ENCODE measurements at regions of chr18 and their contacts with region 1.

Region 1: GRCh38 chr18:13710460-13710859 is 15.9 kb downstream of the FAM210A start:
- DNase-seq: no peak
- ATAC-seq: no peak
- H3K4me3 ChIP-seq: no peak overlapping the region
- H3K27ac ChIP-seq: no peak overlapping the region
- H3K4me1 ChIP-seq: peaks cover 0 to 67% (median 9%) of the 10 kb centered on the region in 12 donors
- H3K27me3 ChIP-seq: no peaks in the 10 kb centered on the region
- CTCF ChIP-seq: no peak
- POLR2A ChIP-seq: no peak

Region 2: DNA sequence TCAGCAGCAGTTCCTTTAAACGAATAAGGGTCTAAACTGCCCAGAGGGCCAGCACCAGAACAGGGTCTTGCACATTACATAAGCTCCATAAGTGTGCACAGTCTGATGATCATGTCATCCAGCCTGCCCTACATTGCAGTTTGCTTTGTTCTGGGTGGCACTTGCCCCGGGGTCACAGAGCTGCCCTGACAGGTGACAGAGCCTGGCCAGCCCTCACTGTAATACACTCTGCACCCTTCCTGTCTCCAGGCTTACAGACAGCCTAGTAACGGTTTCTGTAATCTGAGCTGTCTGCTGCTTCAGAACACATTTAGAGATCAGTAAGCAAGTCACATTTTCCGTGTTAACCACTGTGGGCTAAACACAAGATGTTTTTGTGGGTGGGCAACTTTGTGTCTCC is 197.4 kb before region 1 on chr18:
- intact Hi-C with region 1: no loop called
- DNase-seq: peak in 1 of 5 donors; percentile 49
- ATAC-seq: peak; percentile 90 to 95 (median 93)
- H3K4me3 ChIP-seq: no peak overlapping the region
- H3K27ac ChIP-seq: peak overlapping the region in 4 of 12 donors; percentile 17 to 67 (median 51)
- H3K4me1 ChIP-seq: peaks cover 0 to 34% (median 11%) of the 10 kb centered on the region in 12 donors
- H3K27me3 ChIP-seq: no peaks in the 10 kb centered on the region
- CTCF ChIP-seq: no peak
- POLR2A ChIP-seq: no peak

Region 3: GRCh38 chr18:13585379-13586153 is 124.9 kb before region 1 on chr18:
- intact Hi-C with region 1: loop called in 1 of 10 experiments (anchors 10 kb)
- DNase-seq: no peak
- ATAC-seq: no peak
- H3K4me3 ChIP-seq: no peak overlapping the region
- H3K27ac ChIP-seq: peak overlapping the region in 6 of 12 donors; percentile 10 to 77 (median 50)
- H3K4me1 ChIP-seq: peaks cover 0 to 45% (median 20%) of the 10 kb centered on the region in 12 donors
- H3K27me3 ChIP-seq: no peaks in the 10 kb centered on the region
- CTCF ChIP-seq: no peak
- POLR2A ChIP-seq: no peak

Region 4: DNA sequence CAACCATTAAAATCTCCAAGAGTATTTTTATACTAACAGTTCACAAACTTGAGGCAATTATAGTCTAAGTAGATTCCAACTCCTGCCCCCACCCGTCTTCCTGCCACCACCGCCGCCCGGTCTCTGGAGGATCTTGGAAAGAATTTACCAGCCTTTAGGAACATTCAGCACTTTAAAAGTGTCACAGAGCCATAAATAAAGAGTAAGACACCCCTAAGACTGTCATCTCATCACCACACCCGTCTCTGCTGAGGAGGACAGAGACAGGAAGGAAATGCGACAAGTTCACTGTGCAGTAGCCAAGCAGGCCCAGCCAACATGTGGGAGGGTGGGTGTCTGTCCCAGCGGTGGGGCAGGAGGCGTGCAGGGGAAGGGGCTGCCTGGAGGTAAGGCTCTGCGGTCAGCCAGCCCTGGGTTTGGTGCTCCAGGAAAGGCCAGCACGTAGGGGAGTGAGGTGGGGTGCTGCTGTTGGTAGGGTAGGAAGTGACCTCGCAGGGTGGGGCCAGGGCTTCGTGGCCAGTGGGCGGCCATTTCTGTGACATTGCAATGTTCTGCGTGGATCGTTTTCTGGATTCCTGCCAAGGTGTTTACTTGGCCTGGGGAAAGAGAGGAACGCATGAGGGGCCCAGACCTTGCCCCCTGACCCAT is 95.7 kb before region 1 on chr18:
- intact Hi-C with region 1: no loop called
- DNase-seq: peak in 3 of 5 donors; percentile 46 to 79 (median 52)
- ATAC-seq: peak; percentile 8 to 36 (median 18)
- H3K4me3 ChIP-seq: peak overlapping the region in 1 of 12 donors; percentile 17
- H3K27ac ChIP-seq: peak overlapping the region; percentile 27 to 93 (median 83)
- H3K4me1 ChIP-seq: peaks cover 3 to 84% (median 43%) of the 10 kb centered on the region in 12 donors
- H3K27me3 ChIP-seq: no peaks in the 10 kb centered on the region
- CTCF ChIP-seq: no peak
- POLR2A ChIP-seq: no peak